Activated T-helper 2 cell treated with anti-CD3 and anti-CD28 coated beads, Interferon-gamma antibody, Interleukin-2, Interleukin-4, amounts not matched to agents 10 μg/mL and 5 μg/mL and 100 μg/mL, durations not matched to agents 14 hours and 24 hours and 36 hours (primary cell): ENCODE measurements at regions of chr2 and their contacts with region 1.

Region 1: DNA sequence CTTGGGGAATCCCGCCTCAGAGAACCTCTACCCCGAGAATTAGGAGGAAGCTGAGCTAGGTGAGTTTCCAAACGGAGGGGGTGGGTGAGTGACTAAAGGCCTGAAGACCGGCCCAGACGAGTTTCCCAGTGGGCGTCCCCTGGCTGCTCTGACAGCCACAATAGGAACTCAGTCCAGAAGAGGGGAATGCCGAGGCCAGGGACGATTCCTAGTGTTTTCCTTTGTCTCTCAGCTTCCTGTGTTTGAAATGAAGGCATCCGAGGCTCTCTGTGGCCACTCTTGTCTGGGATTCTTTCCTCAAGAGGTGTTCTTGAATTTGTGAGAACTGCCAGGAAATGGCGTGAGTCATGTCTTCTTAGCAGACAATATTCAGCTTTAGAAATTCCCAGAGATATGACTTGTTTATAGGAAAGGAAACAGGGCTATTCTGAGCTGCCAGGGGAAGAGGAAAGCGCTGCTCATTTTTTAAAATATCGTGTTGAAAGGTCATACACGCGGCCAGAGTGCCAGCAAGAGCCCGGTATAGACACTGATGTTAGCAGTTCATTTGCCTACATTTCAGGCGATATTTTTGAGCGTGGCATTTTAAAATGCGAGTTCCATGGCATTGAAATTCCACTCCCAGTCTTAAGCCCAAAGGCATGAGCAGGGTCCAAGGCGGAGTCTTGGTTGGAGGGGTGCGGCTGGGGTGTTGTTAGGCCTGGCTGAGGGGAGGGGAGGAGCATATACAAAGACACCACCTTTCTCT is 169.1 kb upstream of the KLF7 start:
- DNase-seq: no peak
- H3K4me3 Mint-ChIP-seq: peak overlapping the region; percentile 26
- H3K27ac Mint-ChIP-seq: peak overlapping the region; percentile 93
- H3K4me1 Mint-ChIP-seq: peaks cover 74% of the 10 kb centered on the region
- H3K27me3 Mint-ChIP-seq: no peaks in the 10 kb centered on the region

Region 2: DNA sequence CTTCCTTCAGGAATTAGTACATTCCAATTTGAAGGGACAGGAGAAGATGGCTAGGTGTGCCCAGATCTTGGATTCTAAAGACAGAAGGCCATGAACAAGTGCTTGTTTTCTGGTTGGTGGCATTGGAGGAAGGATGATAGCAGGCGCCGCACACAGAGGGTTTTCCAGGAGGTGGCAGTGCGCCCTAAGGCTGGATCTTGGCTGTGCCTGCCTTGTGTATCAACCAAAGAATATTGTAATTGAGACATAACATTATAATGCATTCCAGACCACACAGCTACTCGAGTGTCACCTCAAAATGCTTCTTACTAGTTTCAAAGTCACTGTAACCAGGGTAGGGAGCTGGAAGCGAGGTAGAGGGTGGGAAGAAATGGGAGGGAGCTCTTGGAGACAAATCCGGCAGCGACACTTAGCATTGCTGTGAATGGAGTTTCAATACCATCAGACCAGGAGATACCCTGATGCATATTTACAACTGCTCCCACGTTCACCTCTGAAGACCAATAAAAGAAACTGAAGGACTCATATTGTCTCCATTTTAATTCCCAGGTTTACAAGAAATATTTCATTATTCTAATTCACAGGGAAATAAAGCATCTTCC is 353.0 kb before region 1 on chr2:
- intact Hi-C with region 1: loop called (anchors 10 kb)
- DNase-seq: peak; percentile 28
- H3K4me3 Mint-ChIP-seq: no peak overlapping the region
- H3K27ac Mint-ChIP-seq: no peak overlapping the region
- H3K4me1 Mint-ChIP-seq: peaks cover 20% of the 10 kb centered on the region
- H3K27me3 Mint-ChIP-seq: peaks cover 11% of the 10 kb centered on the region

Region 3: DNA sequence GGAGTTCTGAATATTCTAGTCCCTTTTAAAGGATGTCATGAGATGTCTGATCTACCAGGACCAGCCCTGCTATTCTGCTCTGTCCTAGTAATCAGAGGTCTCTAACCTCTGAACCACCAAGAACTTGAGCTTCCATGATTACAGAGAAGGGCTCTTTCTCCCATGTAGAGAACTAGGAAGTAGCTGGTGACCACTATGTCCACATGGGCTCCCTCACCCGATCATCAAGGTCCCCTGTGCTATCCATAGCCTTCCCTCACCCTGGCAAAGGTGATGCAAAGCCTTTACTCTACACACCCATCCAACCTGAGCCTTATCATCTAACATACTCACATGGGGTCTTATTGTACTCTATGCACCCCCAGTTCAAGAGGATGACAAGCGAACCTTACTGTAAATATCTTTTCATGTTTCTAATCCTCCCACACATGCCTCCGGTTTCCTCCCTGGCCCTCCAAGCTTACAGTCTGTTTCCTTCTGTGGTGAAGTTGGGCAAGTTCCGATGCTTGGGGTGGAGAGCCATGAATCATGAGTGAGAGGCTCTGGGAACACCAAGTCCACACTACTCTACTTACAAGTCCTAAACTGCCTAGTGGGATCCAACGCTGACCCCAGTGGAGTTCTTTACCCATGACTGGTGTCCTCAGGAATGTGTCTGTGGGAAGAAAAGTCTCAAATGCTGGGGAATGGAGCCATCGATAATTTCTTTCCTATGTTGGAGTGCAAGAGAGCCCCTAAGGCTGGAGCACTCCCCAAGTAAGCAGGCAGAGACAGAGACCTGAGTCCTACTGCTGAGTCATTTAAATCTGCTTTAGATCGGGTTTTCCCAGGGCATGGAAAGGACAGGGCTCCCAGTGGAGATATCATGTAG is 95.7 kb before region 1 on chr2:
- intact Hi-C with region 1: loop called (anchors 1 kb)
- DNase-seq: no peak
- H3K4me3 Mint-ChIP-seq: peak overlapping the region; percentile 64
- H3K27ac Mint-ChIP-seq: peak overlapping the region; percentile 84
- H3K4me1 Mint-ChIP-seq: peaks cover 29% of the 10 kb centered on the region
- H3K27me3 Mint-ChIP-seq: no peaks in the 10 kb centered on the region

Region 4: GRCh38 chr2:207311316-207312005 is 23.3 kb before region 1 on chr2:
- intact Hi-C with region 1: loop called (anchors 1 kb)
- DNase-seq: no peak
- H3K4me3 Mint-ChIP-seq: no peak overlapping the region
- H3K27ac Mint-ChIP-seq: peak overlapping the region; percentile 68
- H3K4me1 Mint-ChIP-seq: peaks cover 55% of the 10 kb centered on the region
- H3K27me3 Mint-ChIP-seq: no peaks in the 10 kb centered on the region

Region 5: DNA sequence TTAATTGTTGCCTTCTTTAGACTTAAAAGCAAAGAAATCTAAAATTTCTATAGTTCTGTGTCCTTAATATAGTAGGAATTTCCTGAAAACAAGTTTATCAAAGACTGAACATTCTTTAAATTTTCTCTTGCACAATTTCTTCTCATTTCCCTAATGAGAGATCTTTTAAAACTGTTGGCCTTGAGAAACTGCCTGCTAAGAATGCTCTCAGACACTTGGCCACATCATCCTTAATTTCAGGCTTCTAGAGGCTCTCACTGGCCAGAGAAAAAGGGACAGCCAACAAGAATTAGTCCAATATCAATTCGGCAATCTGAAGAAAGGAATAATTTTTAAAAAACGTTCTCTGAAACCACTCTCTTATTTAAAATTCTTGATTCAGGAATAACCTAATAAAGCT is 27.9 kb after region 1 on chr2:
- intact Hi-C with region 1: no loop called
- DNase-seq: no peak
- H3K4me3 Mint-ChIP-seq: no peak overlapping the region
- H3K27ac Mint-ChIP-seq: no peak overlapping the region
- H3K4me1 Mint-ChIP-seq: peaks cover 9% of the 10 kb centered on the region
- H3K27me3 Mint-ChIP-seq: no peaks in the 10 kb centered on the region

Region 6: DNA sequence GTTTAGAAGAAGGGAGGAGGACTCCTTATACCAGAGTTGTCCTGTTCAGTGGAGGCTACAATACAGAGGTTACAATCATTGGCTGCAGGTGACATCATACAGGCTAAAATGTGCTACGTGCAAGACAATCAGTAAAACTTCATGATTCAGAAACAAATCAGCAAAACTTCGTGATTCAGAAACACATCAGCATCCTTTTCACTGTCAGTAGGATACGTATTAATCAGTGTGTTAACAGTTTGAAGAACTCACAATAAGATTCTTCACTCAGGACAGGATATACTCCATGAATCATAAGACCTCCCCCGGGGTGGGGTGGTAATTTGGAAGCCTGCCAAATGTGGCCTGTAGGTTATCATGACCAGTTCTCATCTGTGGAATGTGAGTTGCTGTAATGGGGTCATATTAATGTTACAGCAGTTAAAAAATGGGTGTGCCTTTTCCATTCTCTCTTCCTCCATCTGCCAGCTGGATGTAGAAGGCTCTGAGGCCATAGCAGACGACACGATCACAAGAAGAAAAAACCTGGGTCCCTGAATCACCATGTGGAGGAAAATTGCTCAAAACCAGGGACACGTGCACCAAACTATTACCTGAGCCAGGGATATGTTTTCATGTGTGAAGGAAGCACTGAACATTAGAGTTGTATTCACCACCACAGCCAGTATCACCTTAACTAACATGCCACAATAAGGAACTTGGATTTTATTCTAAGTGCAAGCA is 60.2 kb after region 1 on chr2:
- intact Hi-C with region 1: loop called (anchors 10 kb)
- DNase-seq: no peak
- H3K4me3 Mint-ChIP-seq: no peak overlapping the region
- H3K27ac Mint-ChIP-seq: peak overlapping the region; percentile 86
- H3K4me1 Mint-ChIP-seq: peaks cover 16% of the 10 kb centered on the region
- H3K27me3 Mint-ChIP-seq: no peaks in the 10 kb centered on the region

Region 7: DNA sequence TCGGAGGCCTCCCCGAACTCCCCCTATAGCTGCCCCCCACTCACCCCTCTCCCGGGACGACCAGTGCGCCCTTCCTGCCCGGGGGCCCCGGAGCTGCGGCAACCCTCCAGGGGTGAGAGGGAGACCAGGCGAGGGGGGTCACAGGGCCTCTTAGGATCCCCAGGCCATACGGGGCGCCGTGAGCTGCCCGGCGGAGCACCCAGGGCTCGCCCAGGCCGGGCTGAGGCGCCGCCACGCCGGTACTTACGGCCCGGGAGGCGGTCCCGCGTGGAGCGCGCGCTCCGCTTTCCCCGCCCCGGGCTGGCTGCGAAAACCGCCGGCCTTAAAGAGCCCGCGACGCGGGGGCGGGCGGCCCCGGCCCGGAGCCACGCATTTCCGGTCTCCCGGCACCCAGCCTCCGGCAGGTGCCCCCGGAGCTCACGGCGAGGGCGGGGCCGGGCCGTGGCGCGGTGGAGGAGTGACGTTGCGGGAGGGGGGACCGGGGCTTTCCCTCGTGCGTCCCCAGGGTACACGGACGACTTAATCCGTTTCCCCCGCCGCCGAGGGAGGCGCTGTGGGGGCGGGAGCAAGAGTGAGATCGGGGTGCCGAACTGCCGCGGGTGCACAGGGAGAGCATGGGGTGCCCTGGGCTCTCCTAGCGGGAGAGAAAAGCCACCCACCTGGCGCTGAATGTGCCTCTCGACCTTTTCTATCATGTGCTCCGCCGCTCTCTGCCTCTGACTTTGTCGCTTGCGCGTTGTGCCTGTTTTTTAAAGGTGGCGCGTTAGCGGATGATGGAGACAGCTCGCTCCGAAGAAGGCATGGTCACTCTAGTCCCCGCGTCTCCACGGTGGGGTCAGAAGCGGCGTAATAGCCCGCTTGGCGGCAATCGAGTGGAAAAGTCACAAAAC is 290.5 kb after region 1 on chr2 and contains the start of gene METTL21A:
- intact Hi-C with region 1: loop called (anchors 10 kb)
- DNase-seq: peak; percentile 93
- H3K4me3 Mint-ChIP-seq: peak within 1 kb of the TSS; percentile 92
- H3K27ac Mint-ChIP-seq: peak within 1 kb of the TSS; percentile 98
- H3K4me1 Mint-ChIP-seq: peaks cover 37% of the 10 kb centered on the region
- H3K27me3 Mint-ChIP-seq: no peaks in the 10 kb centered on the region
- total RNA-seq, gene METTL21A: 32.1 and 35.1 TPM in 2 replicates